ENCODE measurements at regions of chr3 and their contacts with region 1.

Region 1: DNA sequence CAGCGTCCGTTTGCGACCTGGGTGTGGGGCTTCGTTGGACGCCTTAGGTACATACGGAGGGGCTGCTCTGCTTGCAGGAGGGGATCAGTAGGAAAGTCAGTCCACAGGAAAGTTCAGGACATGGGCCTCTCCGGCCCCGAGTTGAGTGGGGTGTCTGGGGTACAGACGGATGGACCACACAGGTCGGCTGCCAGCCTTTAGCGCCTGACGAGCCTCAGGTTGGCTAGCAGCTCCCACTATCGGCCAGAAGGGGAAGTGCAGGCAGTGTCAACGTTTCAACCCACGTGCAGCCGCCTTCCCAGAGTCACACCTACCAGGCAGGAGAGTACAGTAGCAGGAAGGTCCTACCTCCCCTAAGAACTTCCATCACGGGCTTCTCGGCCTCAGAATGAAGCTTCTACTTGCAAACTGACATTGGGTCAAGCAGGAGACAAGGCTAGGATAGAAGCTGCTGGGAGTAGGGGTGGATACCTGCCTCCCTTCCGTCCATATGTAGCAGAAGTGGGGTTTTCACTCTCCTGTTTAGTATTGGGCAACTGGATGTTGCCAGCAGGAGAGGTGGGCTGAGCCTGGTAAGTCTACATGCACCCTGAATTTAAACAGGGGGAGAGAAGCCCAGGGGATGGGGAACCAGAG is 1.8 kb upstream of the SCN5A start:
- DNase-seq: peak; percentile 79
- H3K4me3 ChIP-seq: peak overlapping the region in 1 of 2 experiments; percentile 28; a peak in 1 of 4 replicates
- H3K27ac ChIP-seq: no peak overlapping the region
- H3K4me1 ChIP-seq: peaks cover 0 to 17% of the 10 kb centered on the region in 2 experiments; a peak in 1 of 4 replicates
- H3K27me3 ChIP-seq: peaks cover 12% of the 10 kb centered on the region; the same call in 1 of the 2 replicates
- CTCF ChIP-seq: peak; percentile 90
- EP300 ChIP-seq: no peak
- RAD21 ChIP-seq: peak; percentile 96

Region 2: GRCh38 chr3:38496131-38496910 is 155.0 kb before region 1 on chr3 and contains the start of gene EXOG:
- CTCF ChIA-PET with region 1: interaction called, 54 read pairs
- POLR2A ChIA-PET with region 1: no interaction called
- DNase-seq: peak; percentile 98
- H3K4me3 ChIP-seq: peak within 1 kb of the TSS; percentile 55 to 75
- H3K27ac ChIP-seq: peak within 1 kb of the TSS; percentile 59 to 77; a peak in 3 of 4 replicates
- H3K4me1 ChIP-seq: peaks cover 0 to 4% of the 10 kb centered on the region in 2 experiments; a peak in 3 of 4 replicates
- H3K27me3 ChIP-seq: no peaks in the 10 kb centered on the region
- CTCF ChIP-seq: peak; percentile 91
- EP300 ChIP-seq: peak in 1 of 2 experiments; percentile 13; a peak in 1 of 4 replicates
- RAD21 ChIP-seq: peak; percentile 81
- polyA plus RNA-seq, gene EXOG: 6.2 and 8.8 TPM in 2 replicates

Region 3: DNA sequence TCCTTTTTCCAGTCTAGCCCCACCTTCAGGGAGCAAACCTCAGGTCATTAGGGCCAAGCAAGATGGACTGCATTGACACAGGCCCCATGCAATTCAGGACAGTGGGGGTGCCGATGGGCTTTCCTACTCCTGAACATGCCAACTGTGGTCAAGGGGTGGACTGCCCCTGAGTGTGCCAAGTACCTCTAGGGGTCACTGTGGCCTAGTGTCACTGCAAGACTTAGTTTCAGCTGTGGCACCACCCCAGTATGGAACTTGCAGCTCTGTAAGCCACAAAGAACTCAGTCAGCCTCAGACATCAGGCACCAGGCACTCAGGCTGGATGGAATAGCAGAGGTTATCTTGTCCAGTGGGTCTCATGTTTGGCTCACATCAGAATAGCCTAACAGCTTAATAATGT is 122.8 kb before region 1 on chr3:
- CTCF ChIA-PET with region 1: interaction called, 556 read pairs
- POLR2A ChIA-PET with region 1: no interaction called
- DNase-seq: peak; percentile 60
- H3K4me3 ChIP-seq: no peak overlapping the region
- H3K27ac ChIP-seq: no peak overlapping the region
- H3K4me1 ChIP-seq: peaks cover 2 to 4% of the 10 kb centered on the region in 2 experiments; a peak in 1 of 4 replicates
- H3K27me3 ChIP-seq: no peaks in the 10 kb centered on the region
- CTCF ChIP-seq: no peak; the same call in 1 of the 2 replicates
- EP300 ChIP-seq: no peak
- RAD21 ChIP-seq: peak; percentile 66

Region 4: DNA sequence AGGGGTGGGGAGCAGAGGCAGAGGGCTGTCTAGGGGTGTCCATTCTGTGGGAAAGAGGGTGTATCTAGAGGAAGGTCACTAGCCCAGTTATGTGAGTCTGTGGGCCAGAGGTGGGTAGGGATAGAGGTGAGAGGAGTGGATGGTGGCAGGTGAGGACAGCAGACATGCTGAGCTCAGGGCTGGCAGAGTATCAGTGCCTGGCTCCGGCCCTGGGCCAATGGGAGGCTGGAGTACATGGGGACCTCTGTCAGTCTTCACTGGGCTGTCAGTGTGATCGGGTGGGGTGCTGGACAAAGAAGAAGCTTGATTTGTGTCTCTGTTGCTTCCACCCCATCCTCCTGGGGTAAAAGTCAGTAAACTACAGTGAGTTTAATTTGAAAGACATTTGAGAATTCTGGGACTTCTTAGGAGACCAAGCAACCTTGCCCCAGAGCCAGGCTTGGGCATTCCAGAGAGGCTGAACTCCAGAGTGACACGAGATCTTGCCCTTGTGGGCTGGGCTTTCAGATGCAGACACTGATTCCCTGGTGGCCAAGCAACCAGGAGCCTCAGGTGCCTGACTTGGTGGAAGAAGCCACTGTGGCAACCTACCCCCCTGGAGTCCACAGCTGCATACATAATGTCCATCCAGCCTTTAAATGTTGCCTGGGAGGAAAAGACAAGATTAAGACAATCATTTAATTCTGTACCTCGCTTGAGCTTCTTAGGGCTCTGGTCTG is 94.5 kb before region 1 on chr3:
- CTCF ChIA-PET with region 1: interaction called, 10 read pairs
- POLR2A ChIA-PET with region 1: no interaction called
- DNase-seq: no peak
- H3K4me3 ChIP-seq: no peak overlapping the region
- H3K27ac ChIP-seq: no peak overlapping the region
- H3K4me1 ChIP-seq: no peaks in the 10 kb centered on the region; a peak in 1 of 4 replicates
- H3K27me3 ChIP-seq: no peaks in the 10 kb centered on the region
- CTCF ChIP-seq: no peak
- EP300 ChIP-seq: no peak
- RAD21 ChIP-seq: no peak

Region 5: DNA sequence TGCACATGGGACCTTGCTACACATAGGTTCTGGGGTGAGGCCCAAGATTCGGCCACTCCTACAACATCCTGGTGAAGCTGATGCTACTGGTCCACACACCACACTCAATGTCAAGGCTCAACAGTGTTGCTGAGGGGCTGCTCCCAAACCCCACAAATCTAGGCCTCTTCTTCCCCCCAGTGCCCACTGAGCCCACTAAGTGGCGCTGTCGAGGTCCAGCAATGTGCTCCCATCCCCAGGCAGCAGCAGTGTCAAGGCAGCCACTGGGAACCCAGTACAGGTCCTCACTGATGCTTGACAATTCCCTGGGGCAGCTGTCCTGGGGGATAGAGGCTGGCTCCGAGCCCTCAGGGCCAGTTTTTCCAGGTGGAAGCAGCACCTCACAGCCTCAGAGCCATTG is 23.3 kb before region 1 on chr3:
- CTCF ChIA-PET with region 1: interaction called, 62 read pairs
- POLR2A ChIA-PET with region 1: no interaction called
- DNase-seq: peak; percentile 66
- H3K4me3 ChIP-seq: peak overlapping the region in 1 of 2 experiments; percentile 44; a peak in 1 of 4 replicates
- H3K27ac ChIP-seq: no peak overlapping the region
- H3K4me1 ChIP-seq: no peaks in the 10 kb centered on the region
- H3K27me3 ChIP-seq: no peaks in the 10 kb centered on the region
- CTCF ChIP-seq: peak; percentile 58
- EP300 ChIP-seq: no peak
- RAD21 ChIP-seq: peak; percentile 41; the same call in 1 of the 2 replicates

Region 6: GRCh38 chr3:38669668-38670067 is 18.4 kb after region 1 on chr3:
- CTCF ChIA-PET with region 1: interaction called, 26 read pairs
- POLR2A ChIA-PET with region 1: no interaction called
- DNase-seq: no peak
- H3K4me3 ChIP-seq: no peak overlapping the region
- H3K27ac ChIP-seq: no peak overlapping the region
- H3K4me1 ChIP-seq: no peaks in the 10 kb centered on the region
- H3K27me3 ChIP-seq: no peaks in the 10 kb centered on the region; the same call in 1 of the 2 replicates
- CTCF ChIP-seq: no peak
- EP300 ChIP-seq: no peak
- RAD21 ChIP-seq: no peak

Region 7: DNA sequence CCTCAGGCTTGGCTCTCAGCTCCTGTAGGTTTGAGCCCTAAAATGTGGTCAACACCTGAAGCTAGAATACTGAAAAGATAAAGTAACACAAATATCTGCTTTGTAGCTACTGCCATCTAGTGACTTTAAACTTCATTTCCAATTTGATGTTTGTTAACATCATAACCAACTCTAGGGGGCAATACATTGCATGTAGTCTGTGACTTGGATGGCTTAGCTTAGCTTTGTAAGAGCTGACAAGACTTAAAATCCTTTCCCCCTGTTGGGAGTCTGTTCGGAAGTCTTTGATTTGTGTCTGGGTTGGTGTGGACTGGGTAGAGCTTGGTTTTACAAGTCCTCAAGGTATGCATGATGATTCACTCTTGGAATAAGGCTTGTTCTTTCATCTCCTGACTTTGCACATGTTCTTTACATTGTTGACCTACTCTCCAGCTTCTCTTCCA is 348.8 kb after region 1 on chr3:
- CTCF ChIA-PET with region 1: interaction called, 82 read pairs
- POLR2A ChIA-PET with region 1: no interaction called
- DNase-seq: peak; percentile 60
- H3K4me3 ChIP-seq: peak overlapping the region in 1 of 2 experiments; percentile 36; a peak in 1 of 4 replicates
- H3K27ac ChIP-seq: no peak overlapping the region
- H3K4me1 ChIP-seq: no peaks in the 10 kb centered on the region
- H3K27me3 ChIP-seq: no peaks in the 10 kb centered on the region
- CTCF ChIP-seq: peak; percentile 88
- EP300 ChIP-seq: no peak
- RAD21 ChIP-seq: peak; percentile 86

Measured in SK-N-SH (cell line).